Right cardiac atrium (tissue), 5 donors: ENCODE measurements at regions of chr1 and their contacts with region 1.

Region 1: GRCh38 chr1:93814059-93814794 is 64.8 kb downstream of the DNTTIP2 start:
- DNase-seq: peak in 2 of 3 donors; percentile 23 to 50
- ATAC-seq: peak; percentile 71 to 78
- H3K4me3 ChIP-seq: no peak overlapping the region
- H3K27ac ChIP-seq: no peak overlapping the region
- H3K4me1 ChIP-seq: peaks cover 5% of the 10 kb centered on the region
- H3K27me3 ChIP-seq: no peaks in the 10 kb centered on the region

Region 2: DNA sequence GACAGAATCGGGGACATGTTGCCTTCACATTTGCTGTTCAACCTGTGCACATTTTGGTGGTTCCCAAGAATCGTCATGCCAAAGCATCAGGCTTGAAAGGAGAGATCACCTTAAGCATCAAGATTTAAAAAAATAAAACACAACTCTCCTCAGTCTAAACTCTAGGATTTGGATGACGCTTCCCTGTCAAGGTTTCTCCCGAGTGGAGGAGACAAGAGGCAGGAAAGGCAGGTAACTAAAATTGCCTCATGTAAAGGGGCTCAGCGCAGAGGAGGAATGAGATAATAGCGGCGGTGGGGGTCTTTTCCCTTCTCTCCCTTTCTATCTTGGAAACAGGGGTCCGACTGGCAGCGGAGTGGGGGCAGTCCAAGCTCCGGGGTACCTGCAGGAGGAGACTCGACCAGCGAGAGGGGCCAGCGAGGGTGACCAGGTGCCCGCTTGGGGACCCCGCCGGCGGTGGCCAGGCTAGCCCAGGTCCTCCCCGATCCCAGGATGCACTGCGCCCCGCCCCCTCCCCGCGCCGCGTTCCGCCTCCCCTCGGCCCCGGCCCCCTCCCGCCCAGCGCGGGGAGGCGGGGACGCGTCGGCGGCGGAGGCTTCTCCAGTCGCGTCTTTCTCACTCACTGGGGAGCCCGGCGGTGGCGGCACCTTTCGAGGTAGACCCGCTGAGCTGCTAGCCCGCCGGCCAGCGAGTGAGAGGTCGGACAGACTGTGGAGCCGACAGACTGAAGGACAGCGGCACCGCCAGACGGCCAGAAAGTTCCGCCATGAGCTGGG is 366.5 kb before region 1 on chr1 and contains the start of gene FNBP1L:
- intact Hi-C with region 1: loop called in 1 of 4 experiments (anchors 10 kb)
- DNase-seq: peak; percentile 81 to 92 (median 89)
- ATAC-seq: peak; percentile 97 to 98
- H3K4me3 ChIP-seq: peak within 1 kb of the TSS; percentile 98
- H3K27ac ChIP-seq: peak within 1 kb of the TSS; percentile 91
- H3K4me1 ChIP-seq: peaks cover 2% of the 10 kb centered on the region
- H3K27me3 ChIP-seq: no peaks in the 10 kb centered on the region
- total RNA-seq, gene FNBP1L: 15.8 to 21.8 (median 20.0) TPM

Region 3: DNA sequence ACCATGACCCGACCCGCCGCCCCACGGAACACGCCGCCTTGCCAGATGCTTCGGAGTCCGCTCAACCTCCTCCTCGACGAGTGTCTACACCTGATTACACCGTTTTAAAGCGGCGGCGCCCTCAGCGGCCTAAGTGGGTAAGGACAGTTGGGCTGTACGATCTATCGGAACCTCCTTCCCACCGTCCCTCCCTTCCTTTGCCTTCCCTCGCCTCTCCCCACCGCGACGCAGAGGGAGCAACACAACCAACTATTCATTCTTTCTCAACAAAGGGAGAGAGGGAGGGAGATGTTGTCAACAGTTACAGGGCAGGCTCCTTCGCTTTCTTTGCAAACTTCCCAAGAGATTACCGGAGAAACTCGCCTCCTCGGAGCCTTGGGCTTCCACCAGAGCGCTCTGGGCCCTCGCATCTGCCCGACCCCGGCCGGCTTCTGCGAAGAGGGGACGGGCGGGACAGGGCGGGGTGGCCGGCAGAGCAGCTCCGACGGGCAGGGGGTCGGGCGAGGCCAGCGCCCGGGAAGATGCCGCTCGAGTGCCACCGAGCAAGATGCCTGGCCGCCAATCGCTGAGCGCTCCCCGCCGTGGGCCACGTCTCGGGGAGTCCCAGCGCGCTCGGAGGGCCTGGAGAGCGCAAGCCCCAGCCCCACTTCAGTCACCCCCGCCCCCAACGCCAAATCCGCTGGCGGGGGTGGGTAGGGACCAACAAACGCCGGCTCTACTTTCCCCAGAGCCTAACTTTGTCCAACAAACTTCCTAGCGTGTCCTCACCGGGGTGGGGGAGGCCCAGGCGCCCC is 133.3 kb before region 1 on chr1:
- intact Hi-C with region 1: loop called in 2 of 4 experiments (anchors 5 kb)
- DNase-seq: peak; percentile 86 to 95 (median 92)
- ATAC-seq: peak; percentile 89 to 92
- H3K4me3 ChIP-seq: peak overlapping the region; percentile 87
- H3K27ac ChIP-seq: peak overlapping the region; percentile 67
- H3K4me1 ChIP-seq: peaks cover 7% of the 10 kb centered on the region
- H3K27me3 ChIP-seq: no peaks in the 10 kb centered on the region

Region 4: GRCh38 chr1:93692983-93693591 is 121.1 kb before region 1 on chr1:
- intact Hi-C with region 1: loop called in 1 of 4 experiments (anchors 10 kb)
- DNase-seq: no peak
- ATAC-seq: peak in 1 of 2 donors; percentile 22
- H3K4me3 ChIP-seq: no peak overlapping the region
- H3K27ac ChIP-seq: no peak overlapping the region
- H3K4me1 ChIP-seq: no peaks in the 10 kb centered on the region
- H3K27me3 ChIP-seq: no peaks in the 10 kb centered on the region

Region 5: DNA sequence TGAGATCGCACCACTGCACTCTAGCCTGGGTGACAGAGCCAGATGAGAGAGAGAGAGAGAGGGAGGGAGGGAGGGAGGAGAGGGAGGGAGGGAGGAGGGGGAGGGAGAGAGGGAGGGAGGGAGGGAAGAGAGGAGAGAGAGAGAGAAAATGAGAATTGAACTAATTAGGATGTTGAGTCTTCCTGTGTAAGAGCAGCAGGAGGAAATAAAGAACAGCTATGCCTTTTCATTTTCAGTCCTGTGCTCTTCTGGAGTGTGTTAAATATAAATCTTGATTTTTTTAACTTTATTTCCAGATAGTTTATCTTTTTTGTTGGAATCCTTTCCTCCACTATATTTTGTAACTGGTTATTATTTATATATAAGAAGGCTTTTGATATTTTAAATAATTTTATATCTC is 37.7 kb after region 1 on chr1:
- intact Hi-C with region 1: no loop called
- DNase-seq: no peak
- ATAC-seq: no peak
- H3K4me3 ChIP-seq: no peak overlapping the region
- H3K27ac ChIP-seq: no peak overlapping the region
- H3K4me1 ChIP-seq: no peaks in the 10 kb centered on the region
- H3K27me3 ChIP-seq: no peaks in the 10 kb centered on the region